Activated T-helper 1 cell treated with anti-CD3 and anti-CD28 coated beads, Interleukin-12 subunit alpha, Interleukin-12 subunit beta, Interleukin-2, Interleukin-4 antibody, amounts not matched to agents 30 ng/mL and 10 ng/mL and 1 ng/mL, durations not matched to agents 14 hours and 24 hours and 36 hours (primary cell): ENCODE measurements at regions of chr13 and their contacts with region 1.

Region 1: DNA sequence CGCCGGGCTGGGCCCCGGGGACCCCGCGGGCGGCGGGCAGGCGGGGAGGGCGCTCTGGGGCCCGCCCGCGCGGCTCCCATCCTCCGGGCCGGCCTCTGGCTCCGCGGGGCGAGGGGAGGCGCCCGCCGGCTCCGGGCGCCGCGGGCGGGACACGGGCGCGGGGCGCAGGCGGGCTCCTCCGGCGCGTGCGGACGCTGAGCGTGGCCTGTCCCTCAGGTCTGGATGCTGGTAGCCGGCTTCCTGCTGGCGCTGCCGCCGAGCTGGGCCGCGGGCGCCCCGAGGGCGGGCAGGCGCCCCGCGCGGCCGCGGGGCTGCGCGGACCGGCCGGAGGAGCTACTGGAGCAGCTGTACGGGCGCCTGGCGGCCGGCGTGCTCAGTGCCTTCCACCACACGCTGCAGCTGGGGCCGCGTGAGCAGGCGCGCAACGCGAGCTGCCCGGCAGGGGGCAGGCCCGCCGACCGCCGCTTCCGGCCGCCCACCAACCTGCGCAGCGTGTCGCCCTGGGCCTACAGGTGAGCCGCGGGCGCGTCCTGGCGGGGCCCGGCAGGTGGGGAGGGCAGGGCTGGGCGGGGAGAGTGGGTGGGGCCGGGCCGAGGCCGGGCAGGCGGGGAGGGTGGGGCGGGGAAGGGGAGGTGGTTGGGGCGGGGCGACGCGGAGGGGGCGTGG is 414 bp downstream of the IL17D start:
- DNase-seq: peak; percentile 65
- H3K4me3 Mint-ChIP-seq: no peak overlapping the region
- H3K27ac Mint-ChIP-seq: no peak overlapping the region
- H3K4me1 Mint-ChIP-seq: peaks cover 5% of the 10 kb centered on the region
- H3K27me3 Mint-ChIP-seq: peaks cover 40% of the 10 kb centered on the region

Region 2: DNA sequence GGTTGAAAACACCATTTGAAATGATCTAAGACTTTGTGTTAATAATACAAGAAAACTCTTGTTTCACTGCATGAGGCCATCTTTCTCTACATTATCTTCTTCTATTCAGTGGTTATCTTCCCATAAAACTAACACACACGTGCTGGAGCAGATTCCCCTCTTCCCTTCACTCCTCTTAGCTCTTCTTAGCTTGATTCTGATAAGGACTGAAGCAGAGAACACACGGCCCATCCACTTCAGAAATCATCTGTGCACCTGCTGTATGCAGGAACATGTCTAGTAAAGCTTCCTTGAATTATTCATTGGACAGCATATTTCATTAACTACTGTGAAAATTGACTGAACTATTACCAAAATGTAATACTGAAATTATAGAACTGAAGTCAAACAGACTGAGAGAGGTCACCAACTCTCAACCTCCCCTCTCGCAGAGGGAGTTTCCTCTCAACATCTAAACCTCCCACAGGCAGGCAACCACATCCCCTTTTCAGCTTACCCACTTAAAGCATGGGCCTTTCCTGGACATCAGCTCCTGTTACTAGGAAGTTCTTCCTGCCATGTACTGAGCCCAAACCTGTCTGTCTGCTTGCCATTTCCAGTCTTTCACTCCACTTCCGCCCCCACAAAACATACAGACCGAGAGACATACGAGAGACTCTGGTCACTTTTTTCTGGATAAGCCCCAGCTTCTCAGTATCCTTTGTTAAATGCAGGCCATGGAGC is 292.1 kb before region 1 on chr13:
- intact Hi-C with region 1: loop called (anchors 10 kb)
- DNase-seq: peak; percentile 46
- H3K4me3 Mint-ChIP-seq: peak overlapping the region; percentile 61
- H3K27ac Mint-ChIP-seq: peak overlapping the region; percentile 90
- H3K4me1 Mint-ChIP-seq: peaks cover 33% of the 10 kb centered on the region
- H3K27me3 Mint-ChIP-seq: peaks cover 4% of the 10 kb centered on the region

Region 3: GRCh38 chr13:20425819-20426219 is 278.1 kb before region 1 on chr13:
- intact Hi-C with region 1: no loop called
- DNase-seq: no peak
- H3K4me3 Mint-ChIP-seq: no peak overlapping the region
- H3K27ac Mint-ChIP-seq: no peak overlapping the region
- H3K4me1 Mint-ChIP-seq: peaks cover 62% of the 10 kb centered on the region
- H3K27me3 Mint-ChIP-seq: peaks cover 2% of the 10 kb centered on the region

Region 4: GRCh38 chr13:20566898-20567874 is 136.7 kb before region 1 on chr13 and contains the start of gene IFT88:
- intact Hi-C with region 1: loop called (anchors 2 kb)
- DNase-seq: peak; percentile 85
- H3K4me3 Mint-ChIP-seq: peak within 1 kb of the TSS; percentile 88
- H3K27ac Mint-ChIP-seq: peak within 1 kb of the TSS; percentile 88
- H3K4me1 Mint-ChIP-seq: peaks cover 27% of the 10 kb centered on the region
- H3K27me3 Mint-ChIP-seq: no peaks in the 10 kb centered on the region
- total RNA-seq, gene IFT88: 1.5 TPM in 2 replicates

Region 5: DNA sequence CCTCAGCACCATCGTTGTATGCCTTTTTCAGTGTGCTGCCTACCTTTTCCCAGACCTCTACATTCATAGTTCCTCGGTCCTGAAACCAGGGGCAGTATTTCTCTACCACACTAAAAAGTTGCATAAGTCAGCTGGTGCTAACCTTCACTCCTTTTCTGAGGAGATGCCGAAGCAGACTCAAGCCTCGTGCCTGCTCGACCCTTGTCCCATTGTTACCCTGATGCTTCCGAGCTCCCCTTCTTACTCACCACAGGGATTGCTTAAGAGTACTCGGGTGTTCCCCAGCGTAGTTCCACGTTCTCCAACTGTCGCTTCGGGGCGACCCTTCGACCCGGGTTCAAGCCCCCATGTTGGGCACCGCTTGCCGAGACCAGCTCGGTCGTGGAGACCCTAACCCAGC is 19.4 kb before region 1 on chr13:
- intact Hi-C with region 1: no loop called
- DNase-seq: no peak
- H3K4me3 Mint-ChIP-seq: no peak overlapping the region
- H3K27ac Mint-ChIP-seq: no peak overlapping the region
- H3K4me1 Mint-ChIP-seq: no peaks in the 10 kb centered on the region
- H3K27me3 Mint-ChIP-seq: peaks cover 4% of the 10 kb centered on the region

Region 6: DNA sequence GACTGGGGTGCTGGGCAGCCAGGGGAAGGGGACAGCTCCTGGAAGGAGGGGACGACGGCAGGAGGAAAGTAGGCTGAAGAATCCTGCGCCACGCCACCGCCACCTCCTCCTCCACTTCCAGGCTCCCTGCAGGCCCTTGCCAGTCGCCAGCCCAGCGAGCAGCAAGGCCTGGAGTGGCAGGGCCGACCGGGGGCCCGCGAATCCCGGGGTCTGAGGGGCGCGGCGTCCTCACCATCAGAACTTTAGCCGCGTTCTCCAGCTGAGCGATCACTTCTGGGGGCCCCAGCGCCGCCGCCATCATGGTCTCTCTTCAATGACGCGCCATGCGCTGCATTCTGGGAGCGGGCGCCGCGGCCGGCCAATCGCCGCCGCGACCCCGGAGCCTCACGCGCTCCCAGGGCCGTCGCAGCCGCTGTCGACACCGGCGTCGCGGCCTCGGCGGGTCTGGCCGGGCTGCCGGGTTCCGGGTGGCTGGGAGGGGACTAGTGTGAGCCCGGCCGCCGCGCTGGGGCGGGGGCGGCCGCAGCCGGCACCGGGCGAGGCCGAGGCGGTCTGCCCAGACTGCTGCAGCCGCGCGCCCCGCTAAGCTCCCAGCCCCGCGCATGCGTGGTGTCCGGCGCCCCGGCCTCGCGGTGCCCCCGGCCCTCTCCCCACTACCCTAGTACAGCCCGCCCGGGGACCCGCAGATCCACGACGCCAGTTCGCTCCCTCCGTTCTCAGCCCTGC is 198.7 kb after region 1 on chr13 and contains the start of gene XPO4:
- intact Hi-C with region 1: loop called (anchors 1 kb)
- DNase-seq: peak; percentile 80
- H3K4me3 Mint-ChIP-seq: peak within 1 kb of the TSS; percentile 99
- H3K27ac Mint-ChIP-seq: peak within 1 kb of the TSS; percentile 94
- H3K4me1 Mint-ChIP-seq: peaks cover 32% of the 10 kb centered on the region
- H3K27me3 Mint-ChIP-seq: peaks cover 6% of the 10 kb centered on the region
- total RNA-seq, gene XPO4: 33.5 and 34.1 TPM in 2 replicates